ENCODE measurements at regions of chr12 and their contacts with region 1.

Region 1: GRCh38 chr12:46372544-46373110 is at the start of gene SLC38A2:
- DNase-seq: peak; percentile 97
- ATAC-seq: peak; percentile 84
- H3K4me3 ChIP-seq: peak within 1 kb of the TSS; percentile 80 to 99 (median 97)
- H3K4me3 Mint-ChIP-seq: peak within 1 kb of the TSS; percentile 98
- H3K27ac ChIP-seq: peak within 1 kb of the TSS; percentile 90 to 91
- H3K27ac Mint-ChIP-seq: peak within 1 kb of the TSS; percentile 99
- H3K4me1 ChIP-seq: peaks cover 39 to 40% of the 10 kb centered on the region in 2 donors
- H3K4me1 Mint-ChIP-seq: peaks cover 45% of the 10 kb centered on the region
- H3K27me3 ChIP-seq: no peaks in the 10 kb centered on the region
- H3K27me3 Mint-ChIP-seq: no peaks in the 10 kb centered on the region
- CTCF ChIP-seq: no peak
- total RNA-seq, gene SLC38A2: 202 TPM in 2 replicates

Region 2: DNA sequence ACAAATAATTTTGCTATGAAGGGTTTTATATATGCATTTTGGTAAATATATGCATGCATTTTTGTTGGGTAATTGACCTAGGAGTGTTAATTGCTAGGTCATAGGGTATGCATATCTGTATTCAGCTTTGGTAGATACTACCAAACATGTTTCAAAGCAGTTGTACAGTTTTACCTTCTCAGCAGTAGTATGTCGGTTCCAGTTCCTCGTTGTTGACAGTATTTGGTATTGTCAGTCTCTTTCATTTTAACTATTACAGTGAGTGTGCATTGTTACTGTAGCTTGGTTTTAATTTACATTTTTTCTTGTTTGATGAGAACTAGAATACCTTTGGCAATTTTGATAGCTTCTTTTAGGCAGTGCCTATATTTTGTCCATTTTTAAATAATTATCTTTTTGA is 544.2 kb before region 1 on chr12:
- CTCF ChIA-PET with region 1: no interaction called
- POLR2A ChIA-PET with region 1: no interaction called
- intact Hi-C with region 1: no loop called
- DNase-seq: peak; percentile 7
- ATAC-seq: no peak
- H3K4me3 ChIP-seq: no peak overlapping the region
- H3K4me3 Mint-ChIP-seq: no peak overlapping the region
- H3K27ac ChIP-seq: no peak overlapping the region
- H3K27ac Mint-ChIP-seq: no peak overlapping the region
- H3K4me1 ChIP-seq: no peaks in the 10 kb centered on the region
- H3K4me1 Mint-ChIP-seq: peaks cover 6% of the 10 kb centered on the region
- H3K27me3 ChIP-seq: no peaks in the 10 kb centered on the region
- H3K27me3 Mint-ChIP-seq: no peaks in the 10 kb centered on the region
- CTCF ChIP-seq: no peak

Region 3: GRCh38 chr12:46153268-46153872 is 219.3 kb before region 1 on chr12:
- CTCF ChIA-PET with region 1: interaction called, 3 read pairs
- POLR2A ChIA-PET with region 1: no interaction called
- intact Hi-C with region 1: loop called (anchors 5 kb)
- DNase-seq: peak; percentile 56
- ATAC-seq: no peak
- H3K4me3 ChIP-seq: peak overlapping the region in 1 of 5 experiments; percentile 12
- H3K4me3 Mint-ChIP-seq: no peak overlapping the region
- H3K27ac ChIP-seq: no peak overlapping the region
- H3K27ac Mint-ChIP-seq: no peak overlapping the region
- H3K4me1 ChIP-seq: peaks cover 11 to 16% of the 10 kb centered on the region in 2 donors
- H3K4me1 Mint-ChIP-seq: peaks cover 26% of the 10 kb centered on the region
- H3K27me3 ChIP-seq: no peaks in the 10 kb centered on the region
- H3K27me3 Mint-ChIP-seq: peaks cover 4% of the 10 kb centered on the region
- CTCF ChIP-seq: peak; percentile 93

Region 4: GRCh38 chr12:46268590-46269558 is 103.8 kb before region 1 on chr12 and contains the start of gene SLC38A1:
- CTCF ChIA-PET with region 1: no interaction called
- POLR2A ChIA-PET with region 1: interaction called, 7 read pairs
- intact Hi-C with region 1: loop called (anchors 1 kb)
- DNase-seq: peak; percentile 93
- ATAC-seq: peak; percentile 69
- H3K4me3 ChIP-seq: peak within 1 kb of the TSS; percentile 70 to 98 (median 96)
- H3K4me3 Mint-ChIP-seq: no peak within 1 kb of the TSS
- H3K27ac ChIP-seq: peak within 1 kb of the TSS; percentile 91 to 94
- H3K27ac Mint-ChIP-seq: no peak within 1 kb of the TSS
- H3K4me1 ChIP-seq: peaks cover 38 to 41% of the 10 kb centered on the region in 2 donors
- H3K4me1 Mint-ChIP-seq: peaks cover 30% of the 10 kb centered on the region
- H3K27me3 ChIP-seq: no peaks in the 10 kb centered on the region
- H3K27me3 Mint-ChIP-seq: no peaks in the 10 kb centered on the region
- CTCF ChIP-seq: no peak
- total RNA-seq, gene SLC38A1: 205 and 219 TPM in 2 replicates

Region 5: GRCh38 chr12:46401662-46402061 is 29.0 kb after region 1 on chr12:
- CTCF ChIA-PET with region 1: no interaction called
- POLR2A ChIA-PET with region 1: no interaction called
- intact Hi-C with region 1: loop called (anchors 1 kb)
- DNase-seq: no peak
- ATAC-seq: no peak
- H3K4me3 ChIP-seq: no peak overlapping the region
- H3K4me3 Mint-ChIP-seq: no peak overlapping the region
- H3K27ac ChIP-seq: no peak overlapping the region
- H3K27ac Mint-ChIP-seq: no peak overlapping the region
- H3K4me1 ChIP-seq: peaks cover 20 to 26% of the 10 kb centered on the region in 2 donors
- H3K4me1 Mint-ChIP-seq: peaks cover 53% of the 10 kb centered on the region
- H3K27me3 ChIP-seq: no peaks in the 10 kb centered on the region
- H3K27me3 Mint-ChIP-seq: no peaks in the 10 kb centered on the region
- CTCF ChIP-seq: no peak

Region 6: DNA sequence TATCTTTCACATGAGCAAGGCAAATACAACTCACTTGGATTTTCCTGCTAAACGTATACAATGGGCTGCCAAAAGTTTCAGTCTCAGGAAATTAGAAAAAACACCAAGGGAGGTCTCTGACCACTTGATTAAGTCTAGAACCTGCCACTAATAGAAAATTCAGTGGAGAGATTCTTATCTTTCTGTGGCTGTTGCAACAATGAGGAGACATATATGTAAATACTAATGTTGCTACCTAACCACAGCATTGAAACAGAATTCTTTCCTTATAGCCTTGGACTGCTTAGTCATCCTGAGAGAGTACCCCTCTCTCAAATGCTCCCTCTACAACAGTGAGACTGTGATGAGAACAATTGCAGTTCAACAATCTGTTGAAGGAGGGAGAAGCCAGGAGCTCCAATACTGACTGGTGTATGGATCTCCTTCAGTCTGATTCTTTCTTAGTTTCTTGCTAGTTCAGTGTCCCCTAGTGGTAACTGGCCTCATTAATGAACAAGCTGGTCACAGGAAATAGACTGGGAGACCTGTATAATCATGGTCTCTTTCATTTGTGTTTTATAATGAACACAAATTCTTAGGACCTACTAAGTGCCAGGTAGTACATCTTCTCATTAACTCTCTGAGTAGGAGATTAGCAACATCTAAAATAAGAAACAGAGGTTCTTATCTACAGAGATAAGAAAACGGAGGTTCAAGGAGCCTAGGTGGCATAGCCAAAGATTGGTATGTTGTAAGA is 288.7 kb after region 1 on chr12:
- CTCF ChIA-PET with region 1: interaction called, 18 read pairs
- POLR2A ChIA-PET with region 1: no interaction called
- intact Hi-C with region 1: loop called (anchors 1 kb)
- DNase-seq: peak; percentile 70
- ATAC-seq: peak; percentile 88
- H3K4me3 ChIP-seq: peak overlapping the region in 3 of 5 experiments; percentile 1 to 16 (median 7)
- H3K4me3 Mint-ChIP-seq: peak overlapping the region; percentile 29
- H3K27ac ChIP-seq: no peak overlapping the region
- H3K27ac Mint-ChIP-seq: peak overlapping the region; percentile 64
- H3K4me1 ChIP-seq: peaks cover 21 to 27% of the 10 kb centered on the region in 2 donors
- H3K4me1 Mint-ChIP-seq: peaks cover 28% of the 10 kb centered on the region
- H3K27me3 ChIP-seq: no peaks in the 10 kb centered on the region
- H3K27me3 Mint-ChIP-seq: no peaks in the 10 kb centered on the region
- CTCF ChIP-seq: peak; percentile 70

Region 7: GRCh38 chr12:47812797-47813510 is 1440.3 kb after region 1 on chr12:
- CTCF ChIA-PET with region 1: no interaction called
- POLR2A ChIA-PET with region 1: no interaction called
- intact Hi-C with region 1: loop called (anchors 2 kb)
- DNase-seq: peak; percentile 94
- ATAC-seq: peak; percentile 72
- H3K4me3 ChIP-seq: peak overlapping the region; percentile 53 to 68 (median 61)
- H3K4me3 Mint-ChIP-seq: peak overlapping the region; percentile 85
- H3K27ac ChIP-seq: peak overlapping the region; percentile 96 to 98
- H3K27ac Mint-ChIP-seq: peak overlapping the region; percentile 96
- H3K4me1 ChIP-seq: peaks cover 91 to 97% of the 10 kb centered on the region in 2 donors
- H3K4me1 Mint-ChIP-seq: peaks cover 94% of the 10 kb centered on the region
- H3K27me3 ChIP-seq: no peaks in the 10 kb centered on the region
- H3K27me3 Mint-ChIP-seq: no peaks in the 10 kb centered on the region
- CTCF ChIP-seq: no peak

Measured in B cell (primary cell).